Right ventricle myocardium inferior (tissue), 1 donor: ENCODE measurements at regions of chr10 and their contacts with region 1.

Region 1: GRCh38 chr10:84537447-84537931 is 209.1 kb downstream of the CCSER2 start:
- DNase-seq: peak; percentile 75
- ATAC-seq: peak; percentile 87

Region 2: GRCh38 chr10:84264611-84265141 is 272.8 kb before region 1 on chr10:
- intact Hi-C with region 1: loop called (anchors 1 kb)
- DNase-seq: no peak
- ATAC-seq: peak; percentile 89

Region 3: DNA sequence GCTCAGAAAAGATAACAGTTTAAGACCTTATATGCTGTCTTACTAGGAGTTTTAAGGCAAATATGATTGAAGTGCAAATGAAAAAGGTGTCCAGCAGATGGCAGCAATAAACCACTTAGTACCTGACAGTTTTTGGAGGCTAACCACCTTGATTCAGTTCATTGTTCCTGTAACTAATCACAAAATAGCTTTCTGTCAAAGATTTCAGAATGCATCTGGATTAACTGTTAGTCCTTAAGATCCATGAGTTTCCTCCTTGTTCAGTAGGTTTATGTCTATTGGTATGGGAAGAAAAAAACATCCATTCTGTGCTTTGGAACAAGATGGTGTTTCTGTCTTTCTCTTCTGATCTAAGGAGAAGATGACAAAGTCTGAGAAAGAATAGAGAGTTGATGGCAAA is 162.5 kb before region 1 on chr10:
- intact Hi-C with region 1: loop called (anchors 1 kb)
- DNase-seq: no peak
- ATAC-seq: no peak

Region 4: GRCh38 chr10:86376852-86377796 is 1839.6 kb after region 1 on chr10:
- intact Hi-C with region 1: loop called (anchors 10 kb)
- DNase-seq: peak; percentile 90
- ATAC-seq: peak; percentile 85